Activated CD8-positive, alpha-beta memory T cell treated with anti-CD3 and anti-CD28 coated beads, Interleukin-2, amount 10 ng/mL, durations not matched to agents 7 days and 5 days (primary cell): ENCODE measurements at regions of chr12 and their contacts with region 1.

Region 1: GRCh38 chr12:43805860-43806736 is at the start of gene TWF1:
- DNase-seq: peak; percentile 91
- ATAC-seq: peak; percentile 97
- H3K4me3 Mint-ChIP-seq: peak within 1 kb of the TSS; percentile 87
- H3K27ac Mint-ChIP-seq: peak within 1 kb of the TSS; percentile 100
- H3K4me1 Mint-ChIP-seq: peaks cover 24% of the 10 kb centered on the region
- H3K27me3 Mint-ChIP-seq: peaks cover under 1% of the 10 kb centered on the region
- total RNA-seq, gene TWF1: 25.2 to 27.4 TPM

Region 2: DNA sequence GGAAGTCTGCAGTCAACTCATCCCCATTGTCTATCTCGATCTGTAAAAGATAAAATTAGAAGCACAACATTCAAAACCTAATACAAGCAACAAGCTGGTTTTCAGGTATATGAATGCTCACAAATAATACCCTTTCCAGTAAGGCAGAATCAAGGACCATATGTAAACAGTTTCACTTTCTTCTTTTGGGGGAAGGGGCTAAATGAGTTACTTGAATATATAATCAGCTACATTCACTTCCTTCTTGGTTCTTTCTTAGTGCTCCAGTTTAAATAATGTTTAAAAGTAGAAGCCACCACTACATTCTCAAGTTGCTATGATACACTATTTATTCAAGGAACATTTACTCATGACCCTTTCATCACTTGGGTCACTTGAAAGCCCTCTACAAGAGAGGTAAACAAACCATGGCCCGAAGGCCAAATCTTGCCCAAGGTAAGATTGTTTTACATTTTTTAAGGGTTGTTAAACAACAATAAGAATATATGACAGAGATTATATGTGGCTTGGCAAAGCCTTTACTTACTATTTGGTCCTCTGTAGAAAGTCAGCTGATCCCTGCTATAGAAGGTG is 10.3 kb before region 1 on chr12:
- CTCF ChIA-PET with region 1: no interaction called
- DNase-seq: no peak
- ATAC-seq: no peak
- H3K4me3 Mint-ChIP-seq: no peak overlapping the region
- H3K27ac Mint-ChIP-seq: no peak overlapping the region
- H3K4me1 Mint-ChIP-seq: peaks cover 6% of the 10 kb centered on the region
- H3K27me3 Mint-ChIP-seq: no peaks in the 10 kb centered on the region

Region 3: DNA sequence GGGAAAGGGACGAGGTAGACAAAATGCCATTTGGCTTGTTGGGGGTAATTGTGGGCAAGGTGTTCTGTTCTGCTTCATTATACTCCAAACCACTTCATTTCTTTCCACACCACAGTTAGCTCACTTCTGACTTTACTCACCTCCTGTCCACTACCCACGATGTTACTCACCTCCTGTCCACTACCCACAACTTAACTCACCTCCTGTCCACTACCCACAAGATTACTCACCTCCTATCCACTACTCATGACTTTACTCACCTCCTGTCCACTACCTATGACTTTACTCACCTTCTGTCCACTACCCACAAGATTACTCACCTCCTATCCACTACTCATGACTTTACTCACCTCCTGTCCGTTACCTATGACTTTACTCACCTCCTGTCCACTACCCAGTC is 10.1 kb after region 1 on chr12:
- CTCF ChIA-PET with region 1: interaction called, 12 read pairs
- DNase-seq: no peak
- ATAC-seq: peak; percentile 51
- H3K4me3 Mint-ChIP-seq: no peak overlapping the region
- H3K27ac Mint-ChIP-seq: peak overlapping the region; percentile 29
- H3K4me1 Mint-ChIP-seq: peaks cover 7% of the 10 kb centered on the region
- H3K27me3 Mint-ChIP-seq: peaks cover 6% of the 10 kb centered on the region